ENCODE measurements at regions of chr13 and their contacts with region 1.

Region 1: GRCh38 chr13:51452361-51453206 is at the start of gene INTS6:
- DNase-seq: peak; percentile 99
- H3K4me3 ChIP-seq: peak within 1 kb of the TSS; percentile 79 to 99 (median 91)
- H3K27ac ChIP-seq: peak within 1 kb of the TSS; percentile 93
- H3K4me1 ChIP-seq: peaks cover 20% of the 10 kb centered on the region
- H3K27me3 ChIP-seq: no peaks in the 10 kb centered on the region
- CTCF ChIP-seq: no peak
- POLR2A ChIP-seq: peak; percentile 99
- total RNA-seq, gene INTS6: 38.2 and 45.4 TPM in 2 replicates

Region 2: DNA sequence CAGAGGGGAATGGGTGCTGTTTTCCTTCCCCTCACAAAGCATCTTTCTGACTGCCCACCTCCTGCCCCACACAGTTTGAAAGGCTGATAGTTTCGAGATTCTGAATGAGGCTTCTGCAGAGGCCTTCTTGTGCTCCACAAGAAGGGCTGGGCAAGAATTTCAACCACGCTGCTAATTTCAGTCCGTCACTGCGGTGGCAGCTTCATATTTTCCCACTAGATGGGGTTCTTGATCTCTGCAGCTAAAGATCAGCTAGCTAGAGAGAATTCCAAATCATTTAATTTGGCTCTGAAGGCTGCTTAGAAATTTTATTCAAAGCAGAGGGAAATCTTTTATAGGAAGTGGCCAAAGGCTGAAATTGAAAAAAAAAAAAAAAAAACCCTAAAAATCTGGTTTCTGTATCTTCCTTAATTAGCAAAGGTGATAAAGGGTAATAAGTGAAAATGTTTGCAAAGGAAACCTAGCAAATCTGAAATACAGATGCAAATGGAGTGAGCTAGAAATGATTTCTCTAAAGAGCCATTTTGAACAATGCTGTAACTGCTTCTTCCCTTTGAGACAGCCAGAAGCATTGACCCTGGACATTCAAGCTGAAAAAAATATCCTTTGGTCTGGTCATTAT is 303.5 kb before region 1 on chr13:
- CTCF ChIA-PET with region 1: no interaction called
- POLR2A ChIA-PET with region 1: interaction called, 6 read pairs
- dilution Hi-C with region 1: no loop called
- intact Hi-C with region 1: loop called (anchors 10 kb)
- DNase-seq: peak; percentile 78
- H3K4me3 ChIP-seq: no peak overlapping the region
- H3K27ac ChIP-seq: no peak overlapping the region
- H3K4me1 ChIP-seq: peaks cover 11% of the 10 kb centered on the region
- H3K27me3 ChIP-seq: no peaks in the 10 kb centered on the region
- CTCF ChIP-seq: peak; percentile 60 to 68
- POLR2A ChIP-seq: no peak

Region 3: GRCh38 chr13:51475727-51476501 is 23.3 kb after region 1 on chr13:
- CTCF ChIA-PET with region 1: no interaction called
- POLR2A ChIA-PET with region 1: interaction called, 13 read pairs
- dilution Hi-C with region 1: no loop called
- intact Hi-C with region 1: no loop called
- DNase-seq: no peak
- H3K4me3 ChIP-seq: no peak overlapping the region
- H3K27ac ChIP-seq: no peak overlapping the region
- H3K4me1 ChIP-seq: peaks cover 2% of the 10 kb centered on the region
- H3K27me3 ChIP-seq: no peaks in the 10 kb centered on the region
- CTCF ChIP-seq: no peak
- POLR2A ChIP-seq: no peak

Region 4: DNA sequence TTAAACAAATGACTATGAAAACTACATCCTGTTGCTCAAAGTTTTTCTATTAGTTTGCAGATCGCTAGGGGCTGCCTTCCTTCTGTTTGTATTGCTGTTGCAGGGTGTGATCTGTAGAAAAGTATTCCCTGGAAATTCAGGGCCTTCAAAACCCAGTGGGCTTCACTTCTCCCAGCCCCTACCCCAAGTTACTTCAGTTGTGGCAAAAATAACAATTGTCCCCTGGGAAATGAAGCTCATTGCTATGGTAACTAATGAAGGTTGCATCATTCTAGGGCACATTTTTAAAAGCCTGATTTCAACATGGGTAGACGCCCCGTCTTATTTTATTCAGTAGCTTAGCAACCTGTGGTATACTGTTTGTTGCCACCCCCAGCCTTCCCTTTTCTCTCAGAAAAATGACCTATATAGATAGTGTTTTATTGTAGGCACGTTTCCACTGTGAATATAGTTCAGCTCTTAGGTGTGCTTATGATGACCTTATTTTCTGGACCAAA is 192.6 kb after region 1 on chr13:
- CTCF ChIA-PET with region 1: no interaction called
- POLR2A ChIA-PET with region 1: interaction called, 3 read pairs
- dilution Hi-C with region 1: no loop called
- intact Hi-C with region 1: loop called (anchors 1 kb)
- DNase-seq: no peak
- H3K4me3 ChIP-seq: no peak overlapping the region
- H3K27ac ChIP-seq: peak overlapping the region; percentile 87
- H3K4me1 ChIP-seq: peaks cover 28% of the 10 kb centered on the region
- H3K27me3 ChIP-seq: no peaks in the 10 kb centered on the region
- CTCF ChIP-seq: no peak
- POLR2A ChIP-seq: no peak

Region 5: GRCh38 chr13:51803422-51804294 is 351.1 kb after region 1 on chr13 and contains the start of gene DHRS12:
- CTCF ChIA-PET with region 1: interaction called, 13 read pairs
- POLR2A ChIA-PET with region 1: interaction called, 13 read pairs
- dilution Hi-C with region 1: no loop called
- intact Hi-C with region 1: loop called (anchors 1 kb)
- DNase-seq: peak; percentile 75
- H3K4me3 ChIP-seq: peak within 1 kb of the TSS; percentile 62 to 72 (median 71)
- H3K27ac ChIP-seq: peak within 1 kb of the TSS; percentile 92
- H3K4me1 ChIP-seq: peaks cover 35% of the 10 kb centered on the region
- H3K27me3 ChIP-seq: no peaks in the 10 kb centered on the region
- CTCF ChIP-seq: no peak
- POLR2A ChIP-seq: peak; percentile 77
- total RNA-seq, gene DHRS12: 6.4 and 8.9 TPM in 2 replicates